Upper lobe of right lung (tissue), 1 donor: ENCODE measurements at regions of chr4 and their contacts with region 1.

Region 1: GRCh38 chr4:14916554-14917297 is 85.6 kb upstream of the CPEB2 start:
- DNase-seq: no peak
- ATAC-seq: peak; percentile 42
- H3K4me3 ChIP-seq: no peak overlapping the region
- H3K27ac ChIP-seq: no peak overlapping the region
- H3K4me1 ChIP-seq: no peaks in the 10 kb centered on the region
- H3K27me3 ChIP-seq: no peaks in the 10 kb centered on the region
- CTCF ChIP-seq: no peak

Region 2: GRCh38 chr4:14837860-14838259 is 78.9 kb before region 1 on chr4:
- intact Hi-C with region 1: loop called (anchors 5 kb)
- DNase-seq: no peak
- ATAC-seq: peak; percentile 27
- H3K4me3 ChIP-seq: no peak overlapping the region
- H3K27ac ChIP-seq: no peak overlapping the region
- H3K4me1 ChIP-seq: no peaks in the 10 kb centered on the region
- H3K27me3 ChIP-seq: no peaks in the 10 kb centered on the region
- CTCF ChIP-seq: peak; percentile 17

Region 3: DNA sequence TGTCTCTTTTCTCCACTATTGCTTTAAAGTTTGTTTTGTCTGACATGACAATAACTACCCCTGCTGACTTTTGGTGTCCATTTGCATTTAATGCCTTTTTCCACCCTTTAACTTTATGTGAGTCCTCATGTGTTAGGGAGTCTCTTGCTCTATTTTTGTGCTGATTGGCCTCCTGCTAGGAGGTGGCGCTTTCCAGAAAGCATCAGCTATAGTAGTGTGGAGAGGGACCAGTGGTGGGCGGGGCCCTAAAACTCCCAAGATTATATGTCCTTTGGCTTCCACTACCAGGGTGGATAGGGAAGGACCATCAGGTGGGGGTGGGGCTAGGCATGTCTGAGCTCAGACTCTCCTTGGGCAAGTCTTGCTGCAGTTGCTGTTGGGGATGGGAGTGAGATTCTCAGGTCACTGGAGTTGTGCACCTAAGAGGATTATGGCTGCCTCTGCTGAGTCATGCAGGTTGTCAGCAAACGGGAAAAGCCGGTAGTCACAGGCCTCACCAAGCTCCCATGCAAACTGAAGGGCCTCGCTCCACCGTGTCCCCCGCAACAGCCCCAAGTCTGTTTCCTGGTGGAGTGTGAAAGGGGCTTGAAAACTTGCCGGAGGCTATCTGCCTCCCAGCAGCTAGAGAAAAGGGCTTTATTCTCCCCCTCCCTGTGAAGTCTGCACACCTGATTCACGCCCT is 241.8 kb after region 1 on chr4:
- intact Hi-C with region 1: no loop called
- DNase-seq: no peak
- ATAC-seq: no peak
- H3K4me3 ChIP-seq: no peak overlapping the region
- H3K27ac ChIP-seq: no peak overlapping the region
- H3K4me1 ChIP-seq: no peaks in the 10 kb centered on the region
- H3K27me3 ChIP-seq: no peaks in the 10 kb centered on the region
- CTCF ChIP-seq: no peak